ENCODE measurements at regions of chr2 and their contacts with region 1.

Region 1: DNA sequence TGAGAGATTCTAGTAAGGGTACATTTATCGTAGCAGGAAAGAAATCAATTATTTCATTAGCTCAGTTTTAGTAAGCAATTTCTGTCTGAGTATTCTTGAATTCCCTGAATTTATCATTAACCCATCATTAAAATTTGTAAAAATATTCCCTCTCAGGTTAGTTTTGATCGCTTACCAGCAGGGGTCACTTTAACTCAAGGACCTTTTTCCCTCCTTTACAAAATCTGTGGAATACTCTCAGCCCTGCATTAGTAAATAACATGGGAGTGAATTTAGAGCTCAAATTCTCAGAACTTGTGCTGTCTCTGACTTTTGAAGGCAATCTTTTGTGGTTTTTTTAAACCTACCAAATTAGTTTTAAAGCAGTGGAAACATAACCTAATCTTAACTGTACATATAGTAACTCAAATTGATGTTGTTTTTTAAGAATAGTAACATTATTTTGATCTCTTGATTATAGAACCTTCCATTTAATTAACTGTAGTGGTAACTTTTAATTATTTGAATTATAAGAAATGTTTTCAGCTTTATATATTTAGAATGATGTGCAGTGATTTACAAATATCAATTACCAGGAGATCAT is 97.2 kb downstream of the AGPS start:
- DNase-seq: no peak
- ATAC-seq: no peak
- H3K4me3 ChIP-seq: no peak overlapping the region
- H3K4me3 Mint-ChIP-seq: no peak overlapping the region
- H3K27ac ChIP-seq: no peak overlapping the region
- H3K27ac Mint-ChIP-seq: no peak overlapping the region
- H3K4me1 ChIP-seq: no peaks in the 10 kb centered on the region
- H3K4me1 Mint-ChIP-seq: no peaks in the 10 kb centered on the region
- H3K27me3 ChIP-seq: no peaks in the 10 kb centered on the region
- H3K27me3 Mint-ChIP-seq: no peaks in the 10 kb centered on the region

Region 2: GRCh38 chr2:177501186-177501585 is 11.4 kb after region 1 on chr2:
- CTCF ChIA-PET with region 1: no interaction called
- POLR2A ChIA-PET with region 1: no interaction called
- intact Hi-C with region 1: no loop called
- DNase-seq: no peak
- ATAC-seq: no peak
- H3K4me3 ChIP-seq: no peak overlapping the region
- H3K4me3 Mint-ChIP-seq: no peak overlapping the region
- H3K27ac ChIP-seq: no peak overlapping the region
- H3K27ac Mint-ChIP-seq: no peak overlapping the region
- H3K4me1 ChIP-seq: no peaks in the 10 kb centered on the region
- H3K4me1 Mint-ChIP-seq: peaks cover 0 to 9% (median 0%) of the 10 kb centered on the region in 7 donors
- H3K27me3 ChIP-seq: no peaks in the 10 kb centered on the region
- H3K27me3 Mint-ChIP-seq: no peaks in the 10 kb centered on the region

Region 3: GRCh38 chr2:177724398-177725287 is 234.8 kb after region 1 on chr2:
- CTCF ChIA-PET with region 1: no interaction called
- POLR2A ChIA-PET with region 1: no interaction called
- intact Hi-C with region 1: loop called (anchors 2 to 10 kb)
- DNase-seq: peak in 7 of 9 donors; percentile 9 to 37 (median 20)
- ATAC-seq: peak; percentile 55
- H3K4me3 ChIP-seq: no peak overlapping the region
- H3K4me3 Mint-ChIP-seq: no peak overlapping the region
- H3K27ac ChIP-seq: no peak overlapping the region
- H3K27ac Mint-ChIP-seq: no peak overlapping the region
- H3K4me1 ChIP-seq: no peaks in the 10 kb centered on the region
- H3K4me1 Mint-ChIP-seq: peaks cover 0 to 2% (median 0%) of the 10 kb centered on the region in 7 donors
- H3K27me3 ChIP-seq: no peaks in the 10 kb centered on the region
- H3K27me3 Mint-ChIP-seq: peaks cover 11 to 33% (median 14%) of the 10 kb centered on the region in 5 donors

Region 4: DNA sequence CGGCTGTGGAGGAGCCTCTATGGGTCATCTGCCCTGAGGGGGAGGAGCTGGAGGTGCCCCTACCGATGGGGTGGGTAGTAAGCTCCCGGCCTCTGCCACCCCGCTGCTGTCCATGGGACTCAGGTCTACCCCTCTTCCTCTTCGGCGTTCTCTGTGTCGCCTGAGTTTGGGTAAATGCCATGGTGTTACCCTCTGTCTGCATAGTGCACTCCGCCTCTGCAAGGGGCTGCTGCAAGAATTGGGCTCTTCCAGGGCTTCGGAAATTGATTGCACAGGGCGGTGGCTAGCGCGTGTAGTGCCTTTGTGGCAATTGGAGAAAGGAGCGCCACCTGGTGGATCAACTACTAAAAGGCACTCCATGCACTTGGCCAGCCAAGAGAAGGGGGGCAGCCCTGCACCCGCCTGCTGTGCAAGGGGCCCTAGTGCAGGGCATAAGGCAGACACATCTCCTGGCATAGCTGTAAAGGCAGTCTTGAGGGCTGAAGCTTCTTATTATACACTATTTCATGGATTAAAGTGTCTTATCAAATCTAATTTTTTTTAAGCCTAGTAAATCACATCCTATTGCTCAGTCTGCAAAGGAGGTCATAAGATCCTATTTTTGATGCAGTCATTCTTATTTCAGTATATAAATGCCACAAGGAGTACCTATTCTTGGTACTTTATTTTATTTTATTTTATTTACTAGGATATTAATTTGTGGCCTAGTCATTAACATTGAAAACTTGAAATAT is 273.9 kb after region 1 on chr2:
- CTCF ChIA-PET with region 1: no interaction called
- POLR2A ChIA-PET with region 1: no interaction called
- intact Hi-C with region 1: loop called in 1 of 2 experiments (anchors 10 kb)
- DNase-seq: peak; percentile 51 to 75 (median 68)
- ATAC-seq: peak; percentile 95
- H3K4me3 ChIP-seq: peak overlapping the region; percentile 20
- H3K4me3 Mint-ChIP-seq: peak overlapping the region in 8 of 10 donors; percentile 20 to 55 (median 30)
- H3K27ac ChIP-seq: no peak overlapping the region
- H3K27ac Mint-ChIP-seq: peak overlapping the region in 1 of 9 donors; percentile 42
- H3K4me1 ChIP-seq: peaks cover 0 to 4% of the 10 kb centered on the region in 2 donors
- H3K4me1 Mint-ChIP-seq: peaks cover 0 to 11% (median 6%) of the 10 kb centered on the region in 7 donors
- H3K27me3 ChIP-seq: no peaks in the 10 kb centered on the region
- H3K27me3 Mint-ChIP-seq: peaks cover 10 to 28% (median 24%) of the 10 kb centered on the region in 5 donors

Measured in naive thymus-derived CD4-positive, alpha-beta T cell (primary cell).